T-cell (primary cell): ENCODE measurements at regions of chr11 and their contacts with region 1.

Region 1: DNA sequence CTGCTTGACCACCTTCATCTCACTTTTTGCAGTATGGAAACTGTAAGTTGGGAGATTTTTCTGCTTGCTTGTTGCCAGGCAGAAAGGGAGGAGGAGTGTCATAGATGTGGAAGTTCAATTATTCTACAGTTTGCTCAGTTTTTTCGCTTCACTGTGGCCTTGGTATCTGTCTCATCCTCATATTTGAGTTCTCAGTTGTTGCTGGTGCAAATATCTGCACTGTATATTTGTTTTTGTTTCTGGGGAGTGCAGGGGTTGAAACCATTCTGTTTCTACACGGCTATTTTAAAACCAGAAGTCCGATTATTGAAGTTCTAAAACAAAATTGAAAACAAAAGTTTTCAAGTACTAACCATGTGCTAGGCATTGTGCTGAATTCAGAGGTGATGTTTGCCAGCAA is 153.4 kb downstream of the JRKL start:
- DNase-seq: no peak
- ATAC-seq: no peak
- H3K4me3 ChIP-seq: no peak overlapping the region
- H3K4me3 Mint-ChIP-seq: no peak overlapping the region
- H3K27ac ChIP-seq: no peak overlapping the region
- H3K27ac Mint-ChIP-seq: no peak overlapping the region
- H3K4me1 ChIP-seq: no peaks in the 10 kb centered on the region
- H3K4me1 Mint-ChIP-seq: no peaks in the 10 kb centered on the region
- H3K27me3 ChIP-seq: peaks cover 0 to 5% of the 10 kb centered on the region in 2 experiments
- H3K27me3 Mint-ChIP-seq: peaks cover 0 to 13% of the 10 kb centered on the region in 2 donors

Region 2: DNA sequence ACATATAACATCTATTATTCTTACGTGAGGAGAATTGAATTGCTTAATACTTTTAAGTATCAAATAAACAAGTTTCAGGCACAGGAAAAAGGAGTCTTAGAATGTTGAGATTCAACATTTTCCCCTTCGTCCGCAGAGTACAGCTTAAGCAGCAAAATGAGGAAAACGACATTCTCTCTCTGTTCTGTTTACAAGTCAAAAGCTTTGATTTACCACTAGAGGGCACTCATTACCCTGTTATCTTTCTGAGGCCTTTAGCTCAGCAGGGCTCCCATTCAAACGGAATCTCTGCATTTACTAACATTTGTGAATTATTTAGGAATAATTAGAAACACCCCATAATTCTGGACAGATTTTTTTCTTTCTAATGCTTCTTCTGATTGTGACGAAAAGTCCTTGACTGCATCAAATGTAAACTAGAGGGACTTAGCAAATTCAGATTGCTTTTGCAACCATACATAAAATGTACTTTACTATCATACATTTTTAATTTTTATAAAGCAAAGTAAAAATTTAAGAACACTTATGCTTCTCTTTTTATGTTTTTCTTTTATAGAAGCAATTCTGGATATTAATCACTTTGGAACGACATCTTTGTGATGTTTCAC is 78.4 kb before region 1 on chr11:
- CTCF ChIA-PET with region 1: no interaction called
- POLR2A ChIA-PET with region 1: interaction called in 1 of 2 experiments, 10 read pairs
- DNase-seq: peak in 2 of 35 experiments; percentile 4 to 67
- ATAC-seq: peak; percentile 50 to 79 (median 71)
- H3K4me3 ChIP-seq: no peak overlapping the region
- H3K4me3 Mint-ChIP-seq: peak overlapping the region in 1 of 3 donors; percentile 56
- H3K27ac ChIP-seq: no peak overlapping the region
- H3K27ac Mint-ChIP-seq: no peak overlapping the region
- H3K4me1 ChIP-seq: peaks cover 0 to 4% of the 10 kb centered on the region in 2 experiments
- H3K4me1 Mint-ChIP-seq: peaks cover 6 to 8% (median 6%) of the 10 kb centered on the region in 3 donors
- H3K27me3 ChIP-seq: peaks cover 0 to 3% of the 10 kb centered on the region in 2 experiments
- H3K27me3 Mint-ChIP-seq: peaks cover 5% of the 10 kb centered on the region in 2 donors